ENCODE measurements at regions of chr11 and their contacts with region 1.

Region 1: DNA sequence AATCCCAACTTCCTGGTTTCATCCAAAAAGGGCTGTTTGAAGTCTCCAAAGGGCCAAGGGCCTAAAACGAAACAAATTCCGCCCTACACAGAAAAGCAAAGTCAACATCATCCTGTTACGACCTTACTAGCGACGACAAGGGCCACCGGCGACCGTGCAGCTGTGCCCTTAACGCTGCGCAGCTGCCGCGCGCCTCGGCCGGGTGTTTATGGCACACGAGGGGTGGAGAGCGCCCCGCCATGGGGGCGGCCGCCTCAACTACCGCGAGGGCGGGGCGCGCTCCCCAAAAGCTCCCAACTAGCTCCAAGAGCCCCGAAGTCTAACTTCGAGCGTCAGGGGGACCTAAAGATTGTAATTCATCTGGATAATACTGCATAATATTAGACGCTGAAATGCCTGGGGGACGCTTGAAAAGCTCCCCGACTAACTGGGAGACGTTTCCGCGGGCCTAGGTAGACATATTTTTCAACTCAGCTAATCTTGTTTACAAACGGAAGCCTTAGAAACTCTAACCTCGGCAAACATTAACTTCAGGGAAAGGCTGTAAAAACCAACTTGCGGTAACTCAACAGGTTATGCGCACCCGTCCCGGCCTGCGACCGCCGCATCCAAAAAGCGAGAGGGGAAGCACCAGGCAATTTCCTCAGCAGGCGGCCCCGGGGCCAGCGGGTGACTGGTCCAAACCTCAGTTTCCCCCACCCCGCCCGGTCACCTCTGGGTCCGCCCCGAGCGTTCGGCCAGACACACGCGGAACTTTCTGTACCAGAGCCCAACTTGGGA is 694 bp downstream of the TMEM123 start:
- DNase-seq: peak; percentile 57 to 89 (median 78)
- ATAC-seq: peak; percentile 54
- H3K4me3 ChIP-seq: peak overlapping the region; percentile 88 to 90
- H3K4me3 Mint-ChIP-seq: peak overlapping the region; percentile 97
- H3K27ac ChIP-seq: peak overlapping the region; percentile 71 to 85
- H3K27ac Mint-ChIP-seq: peak overlapping the region; percentile 96
- H3K4me1 ChIP-seq: peaks cover 59% of the 10 kb centered on the region
- H3K4me1 Mint-ChIP-seq: peaks cover 72% of the 10 kb centered on the region
- H3K27me3 ChIP-seq: no peaks in the 10 kb centered on the region
- H3K27me3 Mint-ChIP-seq: no peaks in the 10 kb centered on the region
- CTCF ChIP-seq: peak; percentile 12

Region 2: GRCh38 chr11:102115557-102115956 is 336.3 kb before region 1 on chr11:
- CTCF ChIA-PET with region 1: no interaction called
- POLR2A ChIA-PET with region 1: no interaction called
- intact Hi-C with region 1: no loop called
- DNase-seq: no peak
- ATAC-seq: no peak
- H3K4me3 ChIP-seq: no peak overlapping the region
- H3K4me3 Mint-ChIP-seq: no peak overlapping the region
- H3K27ac ChIP-seq: no peak overlapping the region
- H3K27ac Mint-ChIP-seq: no peak overlapping the region
- H3K4me1 ChIP-seq: peaks cover 14% of the 10 kb centered on the region
- H3K4me1 Mint-ChIP-seq: peaks cover 11% of the 10 kb centered on the region
- H3K27me3 ChIP-seq: peaks cover 0 to 6% of the 10 kb centered on the region in 2 experiments
- H3K27me3 Mint-ChIP-seq: peaks cover 43% of the 10 kb centered on the region
- CTCF ChIP-seq: no peak

Region 3: DNA sequence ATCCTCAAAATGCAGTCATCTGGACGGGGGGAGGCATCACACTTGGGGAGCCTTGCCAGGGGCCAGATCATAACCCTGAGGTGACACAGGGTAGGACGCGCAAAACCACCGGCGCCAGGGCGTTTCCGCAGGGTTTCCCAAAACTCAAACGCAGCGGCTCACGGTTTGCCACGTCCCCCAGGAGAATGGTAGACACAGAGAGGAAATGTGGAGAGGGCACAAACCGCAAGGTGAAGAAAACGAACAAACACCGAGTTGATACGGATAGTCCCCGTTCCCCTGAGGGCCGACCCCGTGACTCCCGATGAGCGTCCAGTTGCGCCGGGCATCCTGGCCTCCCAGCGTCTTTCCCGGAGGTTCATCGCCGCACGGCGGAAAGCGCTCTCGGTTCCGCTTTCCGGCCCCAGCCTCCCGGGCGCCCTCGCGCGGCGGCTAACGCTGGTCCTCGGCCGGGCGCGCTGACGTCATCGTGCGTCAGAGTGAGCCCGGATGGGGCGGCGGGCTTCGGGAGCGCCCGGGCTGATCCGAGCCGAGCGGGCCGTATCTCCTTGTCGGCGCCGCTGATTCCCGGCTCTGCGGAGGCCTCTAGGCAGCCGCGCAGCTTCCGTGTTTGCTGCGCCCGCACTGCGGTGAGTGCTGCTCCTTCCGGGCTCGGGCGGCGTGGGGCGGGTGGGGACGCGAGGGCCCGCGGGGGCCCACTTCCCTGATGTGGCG is 105.0 kb before region 1 on chr11 and contains the start of gene BIRC2:
- CTCF ChIA-PET with region 1: interaction called, 6 read pairs
- POLR2A ChIA-PET with region 1: interaction called, 6 read pairs
- intact Hi-C with region 1: loop called (anchors 1 kb)
- DNase-seq: peak; percentile 92 to 97 (median 95)
- ATAC-seq: peak; percentile 78
- H3K4me3 ChIP-seq: peak within 1 kb of the TSS; percentile 60 to 72
- H3K4me3 Mint-ChIP-seq: peak within 1 kb of the TSS; percentile 98
- H3K27ac ChIP-seq: peak within 1 kb of the TSS; percentile 94
- H3K27ac Mint-ChIP-seq: peak within 1 kb of the TSS; percentile 99
- H3K4me1 ChIP-seq: peaks cover 29% of the 10 kb centered on the region
- H3K4me1 Mint-ChIP-seq: peaks cover 46% of the 10 kb centered on the region
- H3K27me3 ChIP-seq: no peaks in the 10 kb centered on the region
- H3K27me3 Mint-ChIP-seq: no peaks in the 10 kb centered on the region
- CTCF ChIP-seq: peak; percentile 54
- total RNA-seq, gene BIRC2: 161 to 178 TPM

Region 4: GRCh38 chr11:102367364-102367763 is 84.5 kb before region 1 on chr11:
- CTCF ChIA-PET with region 1: interaction called, 11 read pairs
- POLR2A ChIA-PET with region 1: interaction called, 5 read pairs
- intact Hi-C with region 1: loop called (anchors 2 to 5 kb)
- DNase-seq: peak in 2 of 9 experiments; percentile 41 to 61
- ATAC-seq: peak; percentile 77
- H3K4me3 ChIP-seq: no peak overlapping the region
- H3K4me3 Mint-ChIP-seq: no peak overlapping the region
- H3K27ac ChIP-seq: no peak overlapping the region
- H3K27ac Mint-ChIP-seq: peak overlapping the region; percentile 66
- H3K4me1 ChIP-seq: peaks cover 22% of the 10 kb centered on the region
- H3K4me1 Mint-ChIP-seq: peaks cover 42% of the 10 kb centered on the region
- H3K27me3 ChIP-seq: no peaks in the 10 kb centered on the region
- H3K27me3 Mint-ChIP-seq: no peaks in the 10 kb centered on the region
- CTCF ChIP-seq: peak; percentile 70

Region 5: DNA sequence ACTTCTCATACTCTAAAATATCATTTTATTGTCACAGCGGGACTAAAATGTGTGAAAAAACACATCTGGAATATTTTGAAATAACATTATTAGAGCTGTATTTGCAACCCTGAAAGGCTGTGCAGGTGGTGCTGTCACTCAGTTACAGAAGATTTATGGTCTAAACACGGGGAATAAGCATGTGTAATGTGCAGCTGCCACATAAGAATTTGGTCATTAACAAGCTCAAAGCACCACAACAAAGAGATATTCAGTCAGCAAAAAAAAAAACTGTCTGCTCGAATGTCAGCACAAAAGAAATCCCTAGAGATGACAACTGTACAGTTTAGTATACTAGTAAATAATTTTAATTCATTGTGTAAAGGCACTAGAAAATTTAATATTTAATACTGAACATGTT is 30.6 kb before region 1 on chr11:
- CTCF ChIA-PET with region 1: interaction called, 5 read pairs
- POLR2A ChIA-PET with region 1: interaction called, 8 read pairs
- intact Hi-C with region 1: loop called in 1 of 2 experiments (anchors 1 kb)
- DNase-seq: peak in 2 of 9 experiments; percentile 39 to 64
- ATAC-seq: peak; percentile 66
- H3K4me3 ChIP-seq: no peak overlapping the region
- H3K4me3 Mint-ChIP-seq: no peak overlapping the region
- H3K27ac ChIP-seq: no peak overlapping the region
- H3K27ac Mint-ChIP-seq: peak overlapping the region; percentile 65
- H3K4me1 ChIP-seq: peaks cover 91% of the 10 kb centered on the region
- H3K4me1 Mint-ChIP-seq: peaks cover 97% of the 10 kb centered on the region
- H3K27me3 ChIP-seq: no peaks in the 10 kb centered on the region
- H3K27me3 Mint-ChIP-seq: no peaks in the 10 kb centered on the region
- CTCF ChIP-seq: no peak

Region 6: DNA sequence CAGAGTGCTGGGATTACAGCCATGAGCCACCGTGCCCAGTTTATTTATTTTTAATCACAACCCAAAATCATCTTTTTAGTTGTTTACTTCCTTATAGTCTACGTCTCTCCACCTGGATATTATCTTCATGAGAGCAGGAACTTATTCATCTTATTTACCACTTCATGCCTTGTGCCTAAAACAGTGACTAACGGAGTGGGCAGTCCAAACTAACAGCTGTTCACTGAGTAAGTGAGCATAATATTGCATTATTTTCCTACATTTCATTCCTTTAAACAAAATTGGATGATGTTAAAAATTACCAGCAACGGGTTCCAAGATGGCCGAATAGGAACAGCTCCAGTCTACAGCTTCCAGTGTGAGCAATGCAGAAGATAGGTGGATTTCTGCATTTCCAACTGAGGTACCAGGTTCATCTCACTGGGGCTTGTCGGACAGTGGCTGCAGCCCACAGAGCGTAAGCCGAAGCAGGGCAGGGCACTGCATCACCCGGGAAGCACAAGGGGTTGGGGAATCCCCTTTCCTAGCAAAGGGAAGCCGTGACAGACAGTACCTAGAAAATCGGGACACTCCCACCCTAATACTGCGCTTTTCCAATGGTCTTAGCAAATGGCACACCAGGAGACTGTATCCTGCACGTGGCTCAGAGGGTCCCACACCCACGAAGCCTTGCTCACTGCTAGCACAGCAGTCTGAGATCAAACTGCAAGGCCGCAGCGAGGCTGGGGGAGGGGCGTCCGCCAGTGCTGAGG is 13.4 kb before region 1 on chr11:
- CTCF ChIA-PET with region 1: no interaction called
- POLR2A ChIA-PET with region 1: interaction called, 7 read pairs
- intact Hi-C with region 1: loop called in 1 of 2 experiments (anchors 1 kb)
- DNase-seq: peak in 5 of 9 experiments; percentile 31 to 76 (median 56)
- ATAC-seq: no peak
- H3K4me3 ChIP-seq: no peak overlapping the region
- H3K4me3 Mint-ChIP-seq: peak overlapping the region; percentile 67
- H3K27ac ChIP-seq: no peak overlapping the region
- H3K27ac Mint-ChIP-seq: peak overlapping the region; percentile 84
- H3K4me1 ChIP-seq: peaks cover 34% of the 10 kb centered on the region
- H3K4me1 Mint-ChIP-seq: peaks cover 88% of the 10 kb centered on the region
- H3K27me3 ChIP-seq: no peaks in the 10 kb centered on the region
- H3K27me3 Mint-ChIP-seq: no peaks in the 10 kb centered on the region
- CTCF ChIP-seq: no peak

Region 7: GRCh38 chr11:102495161-102496042 is 43.5 kb after region 1 on chr11:
- CTCF ChIA-PET with region 1: interaction called, 16 read pairs
- POLR2A ChIA-PET with region 1: interaction called, 4 read pairs
- intact Hi-C with region 1: loop called (anchors 1 to 2 kb)
- DNase-seq: peak in 7 of 9 experiments; percentile 24 to 89 (median 39)
- ATAC-seq: peak; percentile 94
- H3K4me3 ChIP-seq: no peak overlapping the region
- H3K4me3 Mint-ChIP-seq: peak overlapping the region; percentile 43
- H3K27ac ChIP-seq: no peak overlapping the region
- H3K27ac Mint-ChIP-seq: peak overlapping the region; percentile 16
- H3K4me1 ChIP-seq: peaks cover 4% of the 10 kb centered on the region
- H3K4me1 Mint-ChIP-seq: peaks cover 14% of the 10 kb centered on the region
- H3K27me3 ChIP-seq: peaks cover 0 to 4% of the 10 kb centered on the region in 2 experiments
- H3K27me3 Mint-ChIP-seq: peaks cover 3% of the 10 kb centered on the region
- CTCF ChIP-seq: peak; percentile 87

Region 8: GRCh38 chr11:103228807-103229206 is 776.9 kb after region 1 on chr11:
- CTCF ChIA-PET with region 1: no interaction called
- POLR2A ChIA-PET with region 1: no interaction called
- intact Hi-C with region 1: no loop called
- DNase-seq: no peak
- ATAC-seq: no peak
- H3K4me3 ChIP-seq: no peak overlapping the region
- H3K4me3 Mint-ChIP-seq: no peak overlapping the region
- H3K27ac ChIP-seq: no peak overlapping the region
- H3K27ac Mint-ChIP-seq: no peak overlapping the region
- H3K4me1 ChIP-seq: no peaks in the 10 kb centered on the region
- H3K4me1 Mint-ChIP-seq: no peaks in the 10 kb centered on the region
- H3K27me3 ChIP-seq: no peaks in the 10 kb centered on the region
- H3K27me3 Mint-ChIP-seq: no peaks in the 10 kb centered on the region
- CTCF ChIP-seq: no peak

Measured in CD8-positive, alpha-beta T cell (primary cell).